Naive thymus-derived CD8-positive, alpha-beta T cell (primary cell): ENCODE measurements at regions of chr10 and their contacts with region 1.

Region 1: GRCh38 chr10:109934958-109935706 is 11.8 kb upstream of the XPNPEP1 start:
- DNase-seq: peak in 2 of 10 donors; percentile 40 to 48
- ATAC-seq: peak; percentile 36 to 51
- H3K4me3 Mint-ChIP-seq: peak overlapping the region; percentile 65 to 92 (median 83)
- H3K27ac Mint-ChIP-seq: peak overlapping the region; percentile 89 to 98 (median 96)
- H3K4me1 Mint-ChIP-seq: peaks cover 45 to 79% (median 72%) of the 10 kb centered on the region in 4 donors
- H3K27me3 Mint-ChIP-seq: no peaks in the 10 kb centered on the region

Region 2: DNA sequence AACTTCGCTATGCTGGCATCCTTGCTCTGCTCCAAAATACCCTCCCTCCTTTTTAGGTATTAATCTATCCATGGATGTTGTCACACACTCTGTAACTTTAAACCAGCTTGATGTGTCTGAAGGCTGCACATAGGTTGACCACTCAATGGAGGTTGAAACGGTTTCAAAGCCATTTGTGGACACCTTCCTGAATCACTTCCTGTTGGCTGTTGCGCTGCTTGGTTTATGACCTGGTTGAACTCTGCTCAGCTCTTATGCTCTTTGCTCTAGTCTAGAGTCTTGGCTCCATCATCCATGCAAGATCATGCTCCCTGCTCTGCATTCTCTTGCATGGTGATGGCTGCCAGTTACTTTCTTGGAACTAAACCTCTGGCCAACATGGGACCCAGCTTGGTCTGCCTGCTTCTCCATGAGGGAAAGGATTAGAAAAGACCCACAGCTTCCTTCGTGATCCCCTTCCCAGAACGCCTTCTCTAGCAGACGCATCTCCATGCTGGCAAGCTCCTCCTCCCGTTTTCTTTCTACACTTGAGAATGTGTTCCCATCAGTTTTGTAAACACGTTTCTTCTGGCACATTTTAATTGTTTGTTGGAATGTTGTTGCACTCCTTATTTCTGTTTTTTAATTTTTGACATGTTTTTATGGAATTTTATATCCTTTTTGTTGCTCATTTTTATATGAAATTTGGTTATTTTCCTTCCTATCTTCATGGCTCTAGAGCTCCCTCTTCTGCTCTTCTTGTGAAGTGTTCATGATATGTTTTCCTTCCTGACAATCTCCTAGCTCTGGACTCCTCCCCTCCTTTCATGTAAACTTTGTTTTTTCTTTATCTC is 161.6 kb before region 1 on chr10:
- POLR2A ChIA-PET with region 1: no interaction called
- DNase-seq: no peak
- ATAC-seq: no peak
- H3K4me3 Mint-ChIP-seq: no peak overlapping the region
- H3K27ac Mint-ChIP-seq: no peak overlapping the region
- H3K4me1 Mint-ChIP-seq: no peaks in the 10 kb centered on the region
- H3K27me3 Mint-ChIP-seq: peaks cover 4 to 11% (median 6%) of the 10 kb centered on the region in 5 donors

Region 3: DNA sequence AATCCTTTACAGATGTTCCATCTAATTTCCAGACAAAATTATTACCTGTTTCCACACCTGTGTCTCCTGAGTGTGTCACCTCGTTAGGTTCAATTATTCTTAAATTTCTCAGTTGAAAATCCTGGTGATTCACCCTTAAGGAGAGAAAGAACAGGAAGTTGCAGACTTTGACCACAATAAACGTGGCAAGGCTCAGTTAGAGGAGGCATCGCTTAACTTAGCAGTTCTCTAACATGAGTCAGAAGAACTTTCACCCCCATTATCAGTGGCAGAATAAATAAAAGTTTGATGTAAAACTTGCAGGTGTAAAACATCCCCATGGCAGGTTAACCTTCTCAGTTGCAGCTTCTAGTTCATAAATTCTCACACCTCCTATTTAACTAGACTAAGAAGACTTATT is 20.2 kb before region 1 on chr10:
- POLR2A ChIA-PET with region 1: interaction called, 10 read pairs
- DNase-seq: peak in 7 of 10 donors; percentile 29 to 57 (median 35)
- ATAC-seq: peak; percentile 94 to 96
- H3K4me3 Mint-ChIP-seq: peak overlapping the region in 9 of 10 donors; percentile 20 to 78 (median 64)
- H3K27ac Mint-ChIP-seq: peak overlapping the region; percentile 0 to 93 (median 73)
- H3K4me1 Mint-ChIP-seq: peaks cover 43 to 93% (median 78%) of the 10 kb centered on the region in 4 donors
- H3K27me3 Mint-ChIP-seq: no peaks in the 10 kb centered on the region

Region 4: DNA sequence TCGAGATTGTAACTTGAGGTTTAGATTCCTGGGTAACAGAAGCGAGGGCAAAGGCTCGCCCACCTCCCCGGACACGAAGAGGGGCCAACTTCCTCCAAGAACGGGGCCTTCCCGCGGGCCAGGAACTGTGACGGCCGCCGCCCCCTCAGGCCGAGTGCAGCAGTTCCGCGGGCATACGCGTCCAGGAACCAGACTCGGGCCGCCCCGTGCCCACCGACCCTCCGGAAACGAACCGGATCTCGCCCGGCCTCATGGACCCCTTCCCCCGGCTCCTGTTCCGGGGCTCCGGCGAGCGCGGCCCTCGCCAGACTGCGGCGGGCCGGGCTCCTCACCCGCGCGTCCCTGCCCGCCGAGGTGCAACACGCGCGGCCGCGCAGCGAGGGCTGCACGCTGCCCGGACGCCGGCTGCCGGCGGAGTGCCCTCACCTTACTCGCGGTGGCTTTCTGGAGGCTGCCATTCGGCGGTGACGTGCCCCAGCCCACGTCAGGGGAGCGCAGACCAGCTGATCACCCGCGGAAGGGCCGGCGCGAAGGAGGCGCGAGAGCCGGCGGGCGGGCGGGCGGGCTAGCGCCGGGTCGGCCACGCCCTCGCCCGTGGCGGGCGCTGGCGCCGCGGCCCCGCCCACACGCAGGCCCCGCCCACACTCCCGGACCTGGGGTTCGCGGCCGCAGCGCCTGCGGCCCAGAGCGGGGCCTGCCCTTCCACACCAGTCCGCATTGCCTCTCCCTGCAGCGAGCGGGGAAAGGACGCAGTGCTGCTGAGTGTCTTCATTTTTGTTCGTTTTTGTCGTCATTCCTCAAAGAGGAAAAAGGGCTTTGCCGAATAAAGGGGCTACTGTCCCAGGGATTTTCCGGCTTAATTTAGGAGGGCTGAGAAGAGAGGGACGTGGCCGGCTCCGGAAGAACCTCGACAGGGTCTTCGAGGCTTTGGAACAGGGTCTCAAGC is 11.9 kb before region 1 on chr10 and contains the start of gene XPNPEP1:
- POLR2A ChIA-PET with region 1: interaction called, 16 read pairs
- DNase-seq: peak; percentile 66 to 85 (median 70)
- ATAC-seq: peak; percentile 87 to 92
- H3K4me3 Mint-ChIP-seq: peak within 1 kb of the TSS; percentile 71 to 93 (median 90)
- H3K27ac Mint-ChIP-seq: peak within 1 kb of the TSS; percentile 86 to 96 (median 93)
- H3K4me1 Mint-ChIP-seq: peaks cover 29 to 57% (median 54%) of the 10 kb centered on the region in 4 donors
- H3K27me3 Mint-ChIP-seq: no peaks in the 10 kb centered on the region
- polyA plus RNA-seq, gene XPNPEP1: 16.6 to 19.9 (median 18.7) TPM

Region 5: GRCh38 chr10:110022716-110023504 is 87.8 kb after region 1 on chr10:
- POLR2A ChIA-PET with region 1: no interaction called
- DNase-seq: no peak
- ATAC-seq: no peak
- H3K4me3 Mint-ChIP-seq: peak overlapping the region in 9 of 10 donors; percentile 17 to 64 (median 48)
- H3K27ac Mint-ChIP-seq: peak overlapping the region; percentile 29 to 83 (median 68)
- H3K4me1 Mint-ChIP-seq: peaks cover 38 to 83% (median 80%) of the 10 kb centered on the region in 4 donors
- H3K27me3 Mint-ChIP-seq: no peaks in the 10 kb centered on the region